Activated CD4-positive, alpha-beta T cell treated with anti-CD3 and anti-CD28 coated beads, Interleukin-2, amount 10 ng/mL, durations not matched to agents 24 days and 14 days (primary cell): ENCODE measurements at regions of chr7 and their contacts with region 1.

Region 1: GRCh38 chr7:16564909-16565426 is 38.3 kb downstream of the LRRC72 start:
- DNase-seq: peak; percentile 65
- H3K4me3 Mint-ChIP-seq: no peak overlapping the region
- H3K27ac Mint-ChIP-seq: no peak overlapping the region
- H3K4me1 Mint-ChIP-seq: peaks cover 16% of the 10 kb centered on the region
- H3K27me3 Mint-ChIP-seq: peaks cover 9% of the 10 kb centered on the region

Region 2: GRCh38 chr7:16078076-16078952 is 486.7 kb before region 1 on chr7:
- intact Hi-C with region 1: loop called (anchors 1 kb)
- DNase-seq: peak; percentile 72
- H3K4me3 Mint-ChIP-seq: no peak overlapping the region
- H3K27ac Mint-ChIP-seq: no peak overlapping the region
- H3K4me1 Mint-ChIP-seq: no peaks in the 10 kb centered on the region
- H3K27me3 Mint-ChIP-seq: no peaks in the 10 kb centered on the region

Region 3: DNA sequence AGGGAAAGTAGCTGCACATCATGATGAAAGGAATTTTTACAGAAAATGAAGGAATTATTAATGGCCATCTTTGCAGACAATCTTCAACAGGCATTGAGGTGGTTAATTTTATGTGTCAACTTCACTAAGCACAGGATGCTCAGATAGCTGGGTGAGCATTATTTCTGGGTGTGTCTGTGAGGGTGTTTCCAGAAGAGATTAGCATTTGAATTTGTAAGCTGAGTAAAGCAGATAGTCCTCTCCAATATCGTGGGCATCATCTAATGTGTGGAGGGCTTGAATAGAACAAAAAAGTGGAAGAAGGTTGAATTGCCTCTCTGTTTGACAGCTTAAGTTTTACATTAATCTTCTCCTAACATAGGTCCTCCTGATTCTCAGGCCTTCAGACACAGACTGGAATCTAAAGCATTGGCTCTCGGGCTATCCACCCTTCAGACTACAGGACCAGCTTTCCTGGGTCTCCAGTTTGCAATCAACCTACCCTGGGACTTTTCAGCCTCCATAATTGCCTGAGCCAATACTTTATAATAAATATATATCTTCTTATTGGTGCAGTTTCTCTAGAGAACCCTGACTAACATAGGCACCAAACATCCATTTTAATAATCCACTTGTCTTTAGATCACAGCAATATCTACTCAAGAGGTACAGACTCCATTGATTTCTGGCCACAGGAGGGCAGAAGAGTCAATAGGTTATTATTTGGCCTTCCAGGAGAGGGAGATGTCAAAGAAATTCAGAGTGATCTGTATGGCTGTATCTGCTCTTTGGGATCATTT is 133.1 kb before region 1 on chr7:
- intact Hi-C with region 1: loop called (anchors 1 kb)
- DNase-seq: peak; percentile 72
- H3K4me3 Mint-ChIP-seq: no peak overlapping the region
- H3K27ac Mint-ChIP-seq: no peak overlapping the region
- H3K4me1 Mint-ChIP-seq: peaks cover 5% of the 10 kb centered on the region
- H3K27me3 Mint-ChIP-seq: peaks cover 3% of the 10 kb centered on the region